Posterior vena cava (tissue), 2 donors: ENCODE measurements at regions of chr12 and their contacts with region 1.

Region 1: DNA sequence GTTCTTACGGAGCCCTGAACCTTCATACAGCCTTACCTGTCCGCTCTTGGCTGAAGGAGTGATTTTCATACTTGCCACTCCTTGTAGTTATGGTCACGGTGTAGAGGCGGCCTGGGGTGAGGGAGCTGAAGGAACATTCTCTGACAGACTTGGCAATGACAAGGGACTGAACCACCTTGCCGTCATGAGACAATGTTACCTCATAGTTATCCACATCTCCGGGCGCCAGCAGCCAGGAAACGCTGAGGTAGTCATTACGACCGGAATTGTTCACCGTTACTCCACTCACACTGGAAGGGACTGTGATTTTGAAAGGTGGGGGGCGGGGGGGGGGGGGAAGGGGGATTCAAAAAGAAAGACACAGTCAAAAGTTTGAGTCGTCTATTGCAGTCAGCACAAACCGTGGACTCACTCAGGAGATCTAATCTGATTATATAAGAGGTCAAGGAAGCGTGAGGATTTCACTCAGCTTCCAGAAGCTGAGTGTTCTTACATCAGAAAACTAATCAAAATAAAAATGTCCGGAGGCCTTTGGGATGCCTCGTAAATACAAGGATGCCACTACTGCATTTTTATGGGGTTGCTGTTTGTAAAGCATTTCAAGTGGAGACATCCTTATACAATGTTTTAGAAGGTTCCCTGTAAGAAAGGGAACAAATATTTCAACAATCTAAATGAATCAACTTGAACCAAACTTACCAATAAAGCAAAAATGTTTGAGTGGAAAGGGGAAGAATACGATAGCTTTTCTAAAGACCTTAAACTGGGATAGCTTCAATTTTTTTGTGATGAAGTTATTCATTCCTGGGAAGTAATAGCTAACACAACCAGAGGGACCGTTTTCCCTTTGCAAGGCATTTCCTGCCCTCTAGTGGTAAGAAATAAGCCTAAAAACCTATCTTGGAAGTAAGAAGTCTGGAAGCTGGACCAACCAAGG is 60.6 kb downstream of the PTPRB start:
- DNase-seq: no peak

Region 2: DNA sequence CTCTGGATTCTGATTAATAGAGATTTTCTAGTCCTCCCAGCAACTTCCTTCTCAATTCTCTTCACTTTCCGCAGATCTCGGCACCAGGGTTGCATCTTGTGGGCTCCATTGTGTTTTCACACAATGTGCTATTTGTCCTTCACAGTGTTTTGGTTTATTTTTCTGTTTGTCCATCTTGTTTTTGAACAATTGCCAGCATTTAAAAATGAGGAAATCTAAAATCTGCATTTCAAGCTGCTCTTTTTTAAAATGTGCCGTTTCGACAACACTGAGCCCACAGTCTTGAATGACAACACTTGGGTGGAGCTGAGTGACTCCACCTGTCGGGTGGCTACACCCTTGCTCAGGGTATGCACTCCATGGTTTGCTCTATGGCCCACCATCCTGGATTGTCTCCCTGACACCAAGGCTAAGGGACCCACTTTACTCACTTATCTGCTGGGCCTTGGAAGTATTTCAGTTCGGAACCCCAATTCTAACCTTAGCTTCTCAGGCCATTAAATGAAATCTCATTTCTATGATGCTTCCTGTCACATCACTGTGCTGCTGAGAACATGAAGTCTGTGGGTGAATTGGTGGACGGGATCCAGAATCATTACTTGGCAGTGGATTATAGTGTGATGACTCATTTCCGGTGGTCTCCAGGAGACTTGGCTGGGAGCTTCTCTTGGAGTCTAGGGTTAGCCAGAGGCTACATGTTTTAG is 755.0 kb before region 1 on chr12:
- intact Hi-C with region 1: no loop called
- DNase-seq: no peak

Region 3: DNA sequence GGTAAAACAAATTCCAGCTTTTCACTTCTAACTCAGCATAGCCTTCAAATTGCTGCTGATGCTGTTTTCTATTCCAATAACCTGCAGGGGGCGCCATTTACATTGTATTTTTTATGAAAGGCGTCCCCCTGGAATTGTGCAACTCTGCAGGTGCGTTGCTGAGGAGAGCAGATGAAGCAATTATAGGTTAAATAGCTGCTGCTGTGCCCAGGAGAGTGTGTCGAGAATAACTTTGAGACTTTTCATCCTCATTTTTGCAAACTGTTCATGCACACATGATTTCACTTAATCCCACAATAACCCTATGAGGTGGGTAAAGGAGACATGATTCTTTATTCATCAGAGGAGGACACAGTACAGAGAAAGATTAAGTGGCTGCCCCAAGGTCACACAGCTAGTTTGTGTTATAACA is 675.9 kb before region 1 on chr12:
- intact Hi-C with region 1: loop called (anchors 5 kb)
- DNase-seq: no peak

Region 4: GRCh38 chr12:70831538-70831937 is 254.9 kb after region 1 on chr12:
- intact Hi-C with region 1: no loop called
- DNase-seq: no peak